Spleen (tissue), 13 donors: ENCODE measurements at regions of chr13 and their contacts with region 1.

Region 1: DNA sequence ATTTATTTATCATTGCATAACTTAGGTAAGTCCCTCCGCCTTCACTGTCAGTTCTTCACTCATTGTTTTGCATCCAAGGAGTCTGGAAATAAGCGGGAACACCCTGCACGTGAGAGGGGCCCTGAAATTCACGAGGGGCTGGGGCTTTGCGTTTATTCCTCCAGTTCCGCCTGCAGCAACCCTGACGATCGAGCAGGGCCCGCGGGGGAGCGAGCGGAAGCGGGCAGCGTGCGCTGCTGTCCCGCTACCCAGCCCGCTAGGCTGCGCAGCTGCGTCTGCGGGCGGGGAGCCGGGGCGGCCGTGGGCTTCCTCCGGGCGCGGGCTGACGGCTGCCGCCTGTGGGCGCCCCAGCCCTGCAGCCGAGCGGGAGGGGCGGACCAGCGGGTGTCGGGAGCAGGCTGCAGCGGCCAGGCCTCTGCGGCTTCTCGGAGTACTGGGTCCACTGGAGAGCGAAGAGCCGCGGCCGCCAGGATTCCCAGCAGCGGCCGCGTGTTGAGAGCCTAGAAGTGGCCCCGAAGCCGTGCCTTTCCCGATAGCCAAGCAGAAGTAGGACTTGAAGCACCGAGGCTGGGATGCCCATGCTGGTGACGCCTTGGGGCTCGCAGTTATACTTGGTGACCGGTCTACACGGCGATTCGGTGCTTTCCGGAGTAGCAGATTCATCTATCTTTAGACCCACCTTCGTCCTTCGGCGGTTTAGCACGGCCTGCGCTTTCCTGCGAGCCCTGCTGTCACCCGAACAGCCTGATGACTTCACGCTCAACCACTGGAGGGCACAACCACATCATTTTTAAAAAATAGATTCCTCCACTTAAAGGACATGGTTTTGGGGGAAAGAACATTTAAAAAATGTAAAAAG is 32.9 kb upstream of the SACS start:
- DNase-seq: peak; percentile 91
- H3K4me3 ChIP-seq: peak overlapping the region; percentile 42 to 73 (median 50)
- H3K27ac ChIP-seq: peak overlapping the region; percentile 71 to 84 (median 80)
- H3K4me1 ChIP-seq: peaks cover 4 to 24% (median 13%) of the 10 kb centered on the region in 6 donors
- H3K27me3 ChIP-seq: no peaks in the 10 kb centered on the region
- CTCF ChIP-seq: peak; percentile 46 to 85 (median 70)
- POLR2A ChIP-seq: no peak

Region 2: DNA sequence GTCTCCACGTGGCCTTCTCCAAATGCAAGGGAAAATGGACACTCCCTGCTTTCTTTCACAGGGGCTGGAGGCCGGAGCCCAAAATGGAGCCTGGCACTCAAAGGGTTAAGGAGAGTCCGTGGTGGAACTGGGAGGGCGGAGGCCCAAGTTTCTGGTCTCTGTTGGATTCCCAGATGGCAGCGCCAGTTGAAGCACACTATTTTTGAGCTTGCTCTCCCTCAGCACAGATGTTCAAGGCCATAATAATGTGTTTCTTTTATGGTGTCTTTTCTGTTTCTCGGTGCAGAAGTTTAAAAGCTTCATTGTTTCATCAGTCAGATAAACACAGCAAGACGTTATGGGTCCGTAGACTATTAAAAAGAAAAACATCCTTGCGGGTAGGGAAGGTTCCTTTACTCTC is 171.5 kb after region 1 on chr13:
- intact Hi-C with region 1: no loop called
- DNase-seq: no peak
- H3K4me3 ChIP-seq: no peak overlapping the region
- H3K27ac ChIP-seq: no peak overlapping the region
- H3K4me1 ChIP-seq: peaks cover 0 to 22% (median 6%) of the 10 kb centered on the region in 6 donors
- H3K27me3 ChIP-seq: no peaks in the 10 kb centered on the region
- CTCF ChIP-seq: no peak
- POLR2A ChIP-seq: no peak

Region 3: DNA sequence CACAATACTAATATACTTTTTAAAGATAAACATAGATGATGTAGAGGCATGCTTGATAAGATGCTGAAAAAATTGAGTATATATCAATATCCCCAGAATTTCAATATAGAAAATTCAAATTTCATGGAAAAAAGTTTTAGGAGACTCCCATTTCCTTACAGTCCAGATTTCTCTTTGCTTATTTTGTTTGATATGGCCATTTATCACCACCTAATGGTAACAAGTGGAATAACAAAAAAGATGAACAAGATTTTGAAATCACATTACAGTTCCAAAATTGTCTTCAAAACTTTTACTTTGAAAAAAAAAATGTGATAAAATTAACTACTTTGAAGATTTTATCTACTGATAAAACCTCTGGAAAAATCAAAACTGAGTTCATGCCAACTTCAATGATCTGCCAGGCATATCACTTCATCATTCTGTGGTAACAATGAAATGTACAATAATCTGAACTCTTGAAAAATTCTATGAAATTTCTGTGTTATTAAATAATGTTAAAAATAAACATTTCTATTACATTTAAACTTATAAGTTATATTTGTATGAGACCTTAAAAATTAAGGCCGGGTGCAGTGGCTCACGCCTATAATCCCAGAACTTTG is 405.3 kb after region 1 on chr13:
- intact Hi-C with region 1: loop called (anchors 5 kb)
- DNase-seq: no peak
- H3K4me3 ChIP-seq: no peak overlapping the region
- H3K27ac ChIP-seq: no peak overlapping the region
- H3K4me1 ChIP-seq: peaks cover 0 to 12% (median 4%) of the 10 kb centered on the region in 6 donors
- H3K27me3 ChIP-seq: no peaks in the 10 kb centered on the region
- CTCF ChIP-seq: peak; percentile 11 to 66 (median 61)
- POLR2A ChIP-seq: no peak